ENCODE measurements at regions of chr7 and their contacts with region 1.

Region 1: GRCh38 chr7:142782922-142783900 is 12.4 kb downstream of the PRSS2 start:
- DNase-seq: peak; percentile 60 to 85 (median 74)
- H3K4me3 ChIP-seq: peak overlapping the region; percentile 49
- H3K4me3 Mint-ChIP-seq: peak overlapping the region; percentile 79 to 91 (median 83)
- H3K27ac ChIP-seq: no peak overlapping the region
- H3K27ac Mint-ChIP-seq: peak overlapping the region; percentile 84 to 100 (median 94)
- H3K4me1 ChIP-seq: peaks cover 9% of the 10 kb centered on the region
- H3K4me1 Mint-ChIP-seq: peaks cover 9 to 21% (median 15%) of the 10 kb centered on the region in 3 donors
- H3K27me3 ChIP-seq: no peaks in the 10 kb centered on the region
- H3K27me3 Mint-ChIP-seq: no peaks in the 10 kb centered on the region

Region 2: GRCh38 chr7:142632291-142633134 is 150.7 kb before region 1 on chr7:
- CTCF ChIA-PET with region 1: interaction called, 11 read pairs
- POLR2A ChIA-PET with region 1: interaction called, 4 read pairs
- DNase-seq: peak; percentile 18 to 68 (median 56)
- H3K4me3 ChIP-seq: no peak overlapping the region
- H3K4me3 Mint-ChIP-seq: no peak overlapping the region
- H3K27ac ChIP-seq: no peak overlapping the region
- H3K27ac Mint-ChIP-seq: peak overlapping the region in 3 of 8 donors; percentile 21 to 84 (median 23)
- H3K4me1 ChIP-seq: no peaks in the 10 kb centered on the region
- H3K4me1 Mint-ChIP-seq: peaks cover 5 to 18% (median 12%) of the 10 kb centered on the region in 3 donors
- H3K27me3 ChIP-seq: no peaks in the 10 kb centered on the region
- H3K27me3 Mint-ChIP-seq: peaks cover 0 to 3% of the 10 kb centered on the region in 2 donors

Region 3: GRCh38 chr7:142669074-142669654 is 114.0 kb before region 1 on chr7:
- CTCF ChIA-PET with region 1: interaction called, 26 read pairs
- POLR2A ChIA-PET with region 1: interaction called, 17 read pairs
- DNase-seq: peak in 2 of 5 donors; percentile 20 to 29
- H3K4me3 ChIP-seq: no peak overlapping the region
- H3K4me3 Mint-ChIP-seq: no peak overlapping the region
- H3K27ac ChIP-seq: no peak overlapping the region
- H3K27ac Mint-ChIP-seq: peak overlapping the region in 3 of 8 donors; percentile 5 to 64 (median 58)
- H3K4me1 ChIP-seq: peaks cover 16% of the 10 kb centered on the region
- H3K4me1 Mint-ChIP-seq: peaks cover 22 to 26% (median 26%) of the 10 kb centered on the region in 3 donors
- H3K27me3 ChIP-seq: no peaks in the 10 kb centered on the region
- H3K27me3 Mint-ChIP-seq: no peaks in the 10 kb centered on the region

Region 4: GRCh38 chr7:142711746-142712619 is 71.2 kb before region 1 on chr7:
- CTCF ChIA-PET with region 1: interaction called, 18 read pairs
- POLR2A ChIA-PET with region 1: interaction called, 7 read pairs
- DNase-seq: peak in 2 of 5 donors; percentile 27 to 49
- H3K4me3 ChIP-seq: peak overlapping the region; percentile 70
- H3K4me3 Mint-ChIP-seq: peak overlapping the region; percentile 83 to 93 (median 88)
- H3K27ac ChIP-seq: peak overlapping the region; percentile 38
- H3K27ac Mint-ChIP-seq: peak overlapping the region; percentile 87 to 98 (median 94)
- H3K4me1 ChIP-seq: peaks cover 50% of the 10 kb centered on the region
- H3K4me1 Mint-ChIP-seq: peaks cover 56 to 78% (median 74%) of the 10 kb centered on the region in 3 donors
- H3K27me3 ChIP-seq: no peaks in the 10 kb centered on the region
- H3K27me3 Mint-ChIP-seq: no peaks in the 10 kb centered on the region